ENCODE measurements at regions of chr20 and their contacts with region 1.

Region 1: GRCh38 chr20:41003143-41003883 is 25.3 kb upstream of the TOP1 start:
- DNase-seq: peak; percentile 99
- ATAC-seq: peak; percentile 84
- H3K4me3 ChIP-seq: peak overlapping the region; percentile 36 to 63 (median 38)
- H3K27ac ChIP-seq: peak overlapping the region; percentile 50
- H3K4me1 ChIP-seq: peaks cover 80% of the 10 kb centered on the region
- H3K27me3 ChIP-seq: peaks cover 6 to 32% of the 10 kb centered on the region in 2 experiments; a peak in 4 of 5 replicates
- CTCF ChIP-seq: no peak
- EP300 ChIP-seq: peak; percentile 80 to 92
- POLR2A ChIP-seq: no peak
- RAD21 ChIP-seq: no peak

Region 2: DNA sequence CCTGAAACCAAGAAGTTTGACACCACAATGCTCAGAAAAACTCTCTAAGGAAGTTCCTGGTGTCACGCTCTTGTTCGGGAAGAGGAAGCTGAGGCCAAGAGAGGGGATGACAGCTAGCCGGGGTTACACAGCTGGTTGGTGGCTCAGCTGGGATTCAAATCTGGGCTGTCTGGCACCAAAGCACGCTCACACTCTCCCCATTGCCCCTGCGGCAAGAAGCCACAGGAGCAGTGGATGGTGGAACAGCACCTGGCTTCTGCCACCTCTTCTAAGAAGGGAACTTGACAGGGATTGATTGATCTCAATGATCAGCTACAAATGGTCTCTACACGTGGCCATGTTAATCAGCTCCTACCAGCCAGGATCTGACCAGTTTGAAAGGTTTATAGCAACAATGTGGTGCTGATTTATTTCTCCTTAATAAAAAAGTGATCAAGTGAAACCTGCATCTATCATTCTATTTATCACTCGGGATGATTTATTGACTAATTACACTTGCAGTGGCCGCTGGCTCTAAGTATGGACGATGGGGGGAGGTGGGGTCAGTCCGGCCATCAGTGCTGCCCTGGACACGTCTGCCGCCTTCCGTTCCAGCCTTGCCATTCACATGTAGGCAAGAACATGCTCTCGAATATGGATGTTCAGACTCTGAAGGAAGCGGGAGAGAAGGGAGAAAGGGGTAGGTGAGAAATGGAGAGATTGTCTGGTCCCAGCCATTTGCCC is 46.6 kb before region 1 on chr20:
- CTCF ChIA-PET with region 1: no interaction called
- POLR2A ChIA-PET with region 1: no interaction called
- in situ Hi-C with region 1: no loop called
- intact Hi-C with region 1: no loop called
- DNase-seq: no peak
- ATAC-seq: no peak
- H3K4me3 ChIP-seq: no peak overlapping the region
- H3K27ac ChIP-seq: no peak overlapping the region
- H3K4me1 ChIP-seq: no peaks in the 10 kb centered on the region
- H3K27me3 ChIP-seq: peaks cover 0 to 9% of the 10 kb centered on the region in 2 experiments; a peak in 1 of 5 replicates
- CTCF ChIP-seq: no peak
- EP300 ChIP-seq: no peak
- POLR2A ChIP-seq: no peak
- RAD21 ChIP-seq: no peak

Region 3: DNA sequence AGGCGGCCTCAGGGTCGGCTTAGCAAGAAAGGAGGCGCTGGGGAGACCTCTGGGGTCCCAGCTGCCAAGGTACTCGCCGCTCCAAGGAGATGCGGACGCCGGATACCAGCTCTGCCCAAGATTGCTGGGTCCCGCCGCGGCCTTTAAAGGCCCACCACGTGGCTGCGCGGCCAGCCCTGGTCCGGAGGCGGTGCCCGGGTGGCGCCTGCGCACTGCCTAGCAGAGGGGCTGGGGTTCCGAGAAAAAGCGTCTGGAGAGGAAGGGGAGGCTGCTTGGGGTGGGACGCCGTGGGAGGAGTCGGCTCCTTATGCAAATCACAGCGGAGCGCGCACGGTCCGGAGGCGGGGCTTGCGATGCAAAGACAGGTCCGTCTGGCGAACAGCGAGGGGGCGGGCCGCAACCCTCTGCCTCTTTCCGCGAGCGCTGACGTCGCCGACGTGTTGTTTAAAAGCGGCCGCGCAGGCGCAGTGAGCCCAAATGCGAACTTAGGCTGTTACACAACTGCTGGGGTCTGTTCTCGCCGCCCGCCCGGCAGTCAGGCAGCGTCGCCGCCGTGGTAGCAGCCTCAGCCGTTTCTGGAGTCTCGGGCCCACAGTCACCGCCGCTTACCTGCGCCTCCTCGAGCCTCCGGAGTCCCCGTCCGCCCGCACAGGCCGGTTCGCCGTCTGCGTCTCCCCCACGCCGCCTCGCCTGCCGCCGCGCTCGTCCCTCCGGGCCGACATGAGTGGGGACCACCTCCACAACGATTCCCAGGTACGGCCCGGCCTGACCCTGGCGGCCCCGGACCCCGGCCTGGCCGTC is 25.2 kb after region 1 on chr20 and contains the start of gene TOP1:
- CTCF ChIA-PET with region 1: no interaction called
- POLR2A ChIA-PET with region 1: interaction called, 14 read pairs
- in situ Hi-C with region 1: no loop called
- intact Hi-C with region 1: loop called (anchors 1 kb)
- DNase-seq: peak; percentile 100
- ATAC-seq: peak; percentile 94
- H3K4me3 ChIP-seq: peak within 1 kb of the TSS; percentile 91 to 95 (median 95)
- H3K27ac ChIP-seq: peak within 1 kb of the TSS; percentile 82
- H3K4me1 ChIP-seq: peaks cover 53% of the 10 kb centered on the region
- H3K27me3 ChIP-seq: peaks cover 2 to 4% of the 10 kb centered on the region in 2 experiments; a peak in 2 of 5 replicates
- CTCF ChIP-seq: peak; percentile 2; the same call in 1 of the 2 replicates
- EP300 ChIP-seq: peak; percentile 15 to 79; a peak in 2 of 4 replicates
- POLR2A ChIP-seq: peak; percentile 98 to 99
- RAD21 ChIP-seq: peak; percentile 71
- total RNA-seq, gene TOP1: 19.4 and 75.3 TPM in 2 replicates

Region 4: DNA sequence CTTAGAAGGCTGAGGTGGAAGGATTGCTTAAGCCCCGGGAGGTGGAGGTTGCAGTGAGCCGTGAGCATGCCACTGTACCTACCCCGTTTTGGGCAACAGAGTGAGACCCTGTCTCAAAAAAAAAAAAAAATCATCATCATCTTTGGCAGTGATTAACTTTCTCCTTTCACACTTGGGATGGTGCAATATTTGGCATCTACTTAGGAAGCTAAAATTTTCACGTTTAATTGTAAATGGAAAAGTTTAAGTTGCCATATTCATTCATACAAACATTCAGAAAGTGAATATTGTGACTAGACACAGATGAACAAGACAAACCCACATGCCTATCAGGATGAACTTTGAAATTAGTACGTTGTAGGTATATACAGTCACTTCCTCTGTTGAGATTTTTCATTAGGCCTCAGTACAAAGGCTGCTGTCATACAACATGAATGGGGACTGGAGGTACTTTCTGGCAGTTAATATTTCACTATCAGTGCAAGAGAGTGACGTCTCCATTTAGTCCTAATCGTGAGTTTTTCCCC is 35.6 kb after region 1 on chr20:
- CTCF ChIA-PET with region 1: no interaction called
- POLR2A ChIA-PET with region 1: no interaction called
- in situ Hi-C with region 1: no loop called
- intact Hi-C with region 1: loop called (anchors 1 kb)
- DNase-seq: peak; percentile 99
- ATAC-seq: peak; percentile 98
- H3K4me3 ChIP-seq: peak overlapping the region; percentile 26 to 57 (median 39); a peak in 5 of 6 replicates
- H3K27ac ChIP-seq: peak overlapping the region; percentile 84
- H3K4me1 ChIP-seq: peaks cover 93% of the 10 kb centered on the region
- H3K27me3 ChIP-seq: no peaks in the 10 kb centered on the region
- CTCF ChIP-seq: no peak
- EP300 ChIP-seq: peak; percentile 56 to 83; a peak in 3 of 4 replicates
- POLR2A ChIP-seq: peak; percentile 34 to 74; a peak in 3 of 4 replicates
- RAD21 ChIP-seq: no peak

Measured in HepG2 (cell line).